Activated CD4-positive, alpha-beta memory T cell treated with anti-CD3 and anti-CD28 coated beads for 36 hours (primary cell): ENCODE measurements at regions of chr10 and their contacts with region 1.

Region 1: GRCh38 chr10:114470956-114471905 is 66.9 kb upstream of the AFAP1L2 start:
- DNase-seq: peak; percentile 73
- H3K4me3 Mint-ChIP-seq: no peak overlapping the region
- H3K27ac Mint-ChIP-seq: no peak overlapping the region
- H3K4me1 Mint-ChIP-seq: peaks cover 10% of the 10 kb centered on the region
- H3K27me3 Mint-ChIP-seq: no peaks in the 10 kb centered on the region

Region 2: DNA sequence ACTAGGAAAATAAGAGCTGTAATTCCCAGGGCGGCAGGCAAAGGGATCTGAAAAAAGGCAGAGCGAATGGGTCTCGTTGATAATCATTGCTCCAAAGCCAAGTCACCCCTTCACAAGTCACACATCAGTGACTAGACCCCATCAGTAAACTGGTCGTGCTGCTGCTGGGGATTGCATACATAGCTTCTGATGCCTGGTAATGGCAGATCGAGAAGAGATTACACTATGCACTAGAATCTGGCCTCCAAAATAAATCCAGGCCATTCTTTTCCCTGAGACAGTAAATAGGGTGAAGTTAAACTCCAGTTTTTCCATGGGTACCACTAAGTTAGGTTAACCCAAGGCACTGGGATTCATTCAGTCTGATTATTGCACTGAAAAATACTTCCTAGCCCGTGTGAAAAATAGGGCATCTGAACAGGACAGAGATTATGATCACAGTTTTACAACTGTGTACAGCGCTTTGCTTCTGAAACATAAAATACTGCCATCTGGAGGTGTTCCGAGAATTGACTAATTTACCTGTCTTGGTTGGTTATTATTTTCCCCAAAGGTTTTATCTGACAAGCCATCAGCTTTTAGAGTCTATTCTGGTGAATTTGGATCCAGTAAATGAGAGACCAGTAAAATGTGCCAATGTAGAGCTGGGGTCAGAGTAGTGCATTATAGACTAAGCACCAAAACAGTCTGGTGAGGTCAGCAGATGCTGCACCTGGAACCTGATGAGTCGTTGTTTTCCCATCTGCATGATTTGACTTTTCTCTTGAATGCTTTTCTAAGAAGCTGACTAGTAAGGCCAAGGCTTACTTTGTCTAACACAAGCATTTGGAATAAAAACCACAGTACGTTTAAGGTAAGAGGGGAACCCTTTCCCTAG is 15.9 kb after region 1 on chr10:
- CTCF ChIA-PET with region 1: interaction called, 112 read pairs
- POLR2A ChIA-PET with region 1: no interaction called
- intact Hi-C with region 1: loop called (anchors 2 kb)
- DNase-seq: peak; percentile 63
- H3K4me3 Mint-ChIP-seq: no peak overlapping the region
- H3K27ac Mint-ChIP-seq: peak overlapping the region; percentile 85
- H3K4me1 Mint-ChIP-seq: peaks cover 53% of the 10 kb centered on the region
- H3K27me3 Mint-ChIP-seq: no peaks in the 10 kb centered on the region

Region 3: DNA sequence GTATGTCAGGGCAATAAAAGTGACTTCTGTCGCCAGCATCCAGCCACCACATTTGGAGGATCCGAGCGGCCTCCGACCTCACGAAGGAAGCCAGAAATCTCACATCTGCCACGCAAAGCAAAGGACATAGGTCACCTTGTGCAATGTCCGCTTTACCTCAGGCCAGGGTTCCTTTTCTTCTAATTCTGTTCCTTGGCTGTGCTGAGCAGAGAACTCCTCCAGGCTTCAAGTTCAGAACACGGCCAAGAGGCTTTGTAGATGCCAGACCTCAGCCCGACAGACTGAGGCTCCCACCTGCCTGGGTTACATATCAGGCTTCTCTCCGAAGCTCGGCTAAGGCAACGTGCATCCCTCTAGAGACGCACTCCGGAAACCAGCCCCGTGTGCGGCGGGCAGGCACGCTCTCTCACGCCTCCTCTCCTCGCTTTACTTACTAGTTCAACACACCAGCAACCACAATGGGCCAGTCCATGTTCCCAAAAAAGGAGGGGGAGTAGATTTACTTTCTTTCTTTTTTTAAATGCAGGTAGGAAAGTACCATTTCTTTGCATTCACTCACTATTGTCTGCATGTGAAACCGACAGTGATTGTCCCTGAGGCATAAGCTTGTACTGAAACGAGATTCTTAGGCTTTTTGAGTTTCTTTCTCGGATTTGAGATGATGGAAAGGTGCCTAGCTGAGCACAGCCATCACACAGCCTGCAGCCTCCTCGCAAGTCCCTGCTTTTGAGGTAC is 55.4 kb after region 1 on chr10:
- CTCF ChIA-PET with region 1: interaction called, 23 read pairs
- POLR2A ChIA-PET with region 1: no interaction called
- intact Hi-C with region 1: loop called (anchors 1 kb)
- DNase-seq: peak; percentile 94
- H3K4me3 Mint-ChIP-seq: peak overlapping the region; percentile 93
- H3K27ac Mint-ChIP-seq: peak overlapping the region; percentile 95
- H3K4me1 Mint-ChIP-seq: peaks cover 43% of the 10 kb centered on the region
- H3K27me3 Mint-ChIP-seq: no peaks in the 10 kb centered on the region

Region 4: DNA sequence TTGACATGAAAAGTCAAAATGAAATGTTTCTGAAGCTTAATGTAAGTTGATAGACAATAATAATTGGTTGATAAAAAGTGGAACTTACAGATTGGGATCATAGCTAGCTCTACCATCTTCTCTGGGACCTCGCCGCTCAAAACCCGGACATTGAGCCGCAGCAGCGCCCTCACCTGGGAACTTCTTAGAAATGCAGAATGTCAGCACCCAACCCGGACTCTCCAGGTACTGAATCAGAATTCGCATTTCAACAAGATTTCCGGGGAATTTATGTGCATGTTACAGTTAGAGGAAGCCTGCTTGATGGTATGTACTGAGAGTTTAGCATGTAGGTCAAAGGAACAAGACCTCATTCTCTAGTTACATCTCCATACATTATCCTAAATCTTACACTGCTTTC is 223.5 kb after region 1 on chr10:
- CTCF ChIA-PET with region 1: interaction called, 32 read pairs
- POLR2A ChIA-PET with region 1: no interaction called
- intact Hi-C with region 1: loop called (anchors 2 kb)
- DNase-seq: peak; percentile 63
- H3K4me3 Mint-ChIP-seq: no peak overlapping the region
- H3K27ac Mint-ChIP-seq: no peak overlapping the region
- H3K4me1 Mint-ChIP-seq: peaks cover 5% of the 10 kb centered on the region
- H3K27me3 Mint-ChIP-seq: peaks cover 4% of the 10 kb centered on the region

Region 5: DNA sequence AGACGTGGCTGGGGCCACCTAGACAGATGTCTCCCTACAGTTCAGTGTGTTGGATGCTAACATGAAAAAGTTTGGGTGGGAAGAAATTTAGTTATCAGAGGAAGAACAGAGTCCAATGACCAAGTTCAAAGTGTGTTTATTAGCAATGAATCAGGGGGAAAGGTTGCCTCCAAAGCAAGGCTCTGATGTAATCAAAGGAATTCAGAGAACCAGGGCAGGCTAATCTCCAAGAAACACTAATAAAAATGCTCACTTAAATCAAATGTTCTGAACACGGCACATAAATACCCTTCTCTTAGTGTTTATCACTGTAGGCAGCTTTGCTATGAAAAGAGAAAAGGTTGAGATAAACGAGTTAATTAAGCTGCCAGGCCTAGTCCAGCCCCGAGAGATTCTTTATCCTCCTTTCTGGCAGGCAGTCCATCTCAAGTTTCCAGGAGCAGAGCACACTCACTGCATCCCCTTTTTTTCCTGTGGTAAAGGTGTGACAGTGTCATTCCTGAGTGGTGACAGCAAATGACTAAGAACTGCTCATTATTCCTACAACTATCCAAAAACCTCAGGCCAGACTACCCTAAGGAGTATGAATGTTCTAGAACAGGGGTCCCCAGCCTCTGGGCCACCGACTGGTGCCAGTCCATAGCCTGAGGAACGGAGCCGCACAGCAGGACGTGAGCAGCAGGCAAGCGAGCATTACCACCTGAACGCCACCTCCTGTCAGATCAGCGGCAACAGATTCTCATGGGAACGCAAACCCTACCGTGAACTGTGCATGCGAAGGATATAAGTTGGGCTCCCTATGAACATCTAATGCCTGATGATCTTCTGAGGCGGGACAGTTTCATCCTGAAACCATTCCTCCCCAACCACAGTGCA is 283.5 kb after region 1 on chr10:
- CTCF ChIA-PET with region 1: no interaction called
- POLR2A ChIA-PET with region 1: no interaction called
- intact Hi-C with region 1: no loop called
- DNase-seq: no peak
- H3K4me3 Mint-ChIP-seq: no peak overlapping the region
- H3K27ac Mint-ChIP-seq: no peak overlapping the region
- H3K4me1 Mint-ChIP-seq: no peaks in the 10 kb centered on the region
- H3K27me3 Mint-ChIP-seq: peaks cover 2% of the 10 kb centered on the region

Region 6: DNA sequence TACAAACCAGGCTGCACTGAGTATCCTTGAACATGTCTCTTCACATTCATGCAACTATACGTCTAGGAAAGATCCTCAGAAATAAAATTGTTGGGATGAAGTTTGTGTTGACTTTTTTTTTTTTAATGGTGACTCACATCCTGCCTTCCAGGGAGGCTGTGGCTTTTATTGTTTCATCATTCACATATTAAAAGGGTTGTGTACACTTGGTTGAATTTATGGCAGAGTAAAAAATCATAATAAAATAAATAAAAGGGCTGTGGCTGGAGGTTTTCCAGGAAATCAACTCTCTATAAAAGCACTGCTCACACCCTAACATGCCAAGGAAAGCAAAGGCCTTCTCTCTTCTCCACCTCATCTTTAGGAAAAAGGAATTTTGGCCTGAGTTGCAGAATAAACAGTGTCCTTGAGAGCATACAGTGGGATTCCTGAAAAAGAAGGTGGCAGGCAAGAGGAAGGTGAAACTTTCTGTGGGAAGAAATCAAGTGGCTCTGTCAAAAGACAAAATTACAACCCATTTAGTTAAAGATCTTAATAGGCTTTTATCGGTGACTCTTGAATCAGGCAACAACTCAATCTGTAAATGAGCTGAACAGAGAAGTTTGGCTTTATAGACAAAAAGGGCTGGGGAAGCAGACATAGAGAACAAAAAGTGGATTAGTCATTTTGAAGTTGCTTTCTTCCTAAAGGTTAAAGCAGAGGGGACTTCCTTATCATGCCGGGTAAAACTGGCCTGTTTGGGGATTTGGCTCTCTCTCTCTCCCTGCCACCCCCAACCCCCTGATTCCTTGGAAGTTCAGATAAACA is 308.8 kb after region 1 on chr10:
- CTCF ChIA-PET with region 1: interaction called, 5 read pairs
- POLR2A ChIA-PET with region 1: no interaction called
- intact Hi-C with region 1: loop called (anchors 5 kb)
- DNase-seq: no peak
- H3K4me3 Mint-ChIP-seq: no peak overlapping the region
- H3K27ac Mint-ChIP-seq: no peak overlapping the region
- H3K4me1 Mint-ChIP-seq: peaks cover 7% of the 10 kb centered on the region
- H3K27me3 Mint-ChIP-seq: no peaks in the 10 kb centered on the region